PC-3 (cell line): ENCODE measurements at regions of chr13 and their contacts with region 1.

Region 1: DNA sequence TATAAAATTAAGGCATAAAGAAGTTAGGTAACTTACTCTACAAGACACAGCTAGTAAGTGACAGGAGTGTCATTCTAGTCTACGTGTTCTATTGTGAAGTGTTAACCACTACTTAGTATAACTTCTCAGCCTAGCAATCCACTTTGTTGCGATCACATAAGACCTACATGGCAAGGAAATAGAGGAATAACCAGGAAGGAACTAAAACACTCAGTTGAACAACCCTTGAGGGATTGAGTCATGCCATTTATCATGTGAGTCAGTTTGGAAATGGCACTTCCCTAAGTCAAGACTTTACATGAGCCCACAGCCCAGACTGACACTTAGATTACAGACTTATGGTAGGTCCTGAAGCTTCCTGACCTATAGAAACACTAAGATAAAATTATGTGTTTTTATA is 279.5 kb upstream of the PCDH20 start:
- DNase-seq: peak; percentile 46
- ATAC-seq: peak; percentile 91
- H3K4me3 ChIP-seq: no peak overlapping the region
- H3K27ac ChIP-seq: no peak overlapping the region
- H3K4me1 ChIP-seq: no peaks in the 10 kb centered on the region
- H3K27me3 ChIP-seq: no peaks in the 10 kb centered on the region
- CTCF ChIP-seq: no peak

Region 2: DNA sequence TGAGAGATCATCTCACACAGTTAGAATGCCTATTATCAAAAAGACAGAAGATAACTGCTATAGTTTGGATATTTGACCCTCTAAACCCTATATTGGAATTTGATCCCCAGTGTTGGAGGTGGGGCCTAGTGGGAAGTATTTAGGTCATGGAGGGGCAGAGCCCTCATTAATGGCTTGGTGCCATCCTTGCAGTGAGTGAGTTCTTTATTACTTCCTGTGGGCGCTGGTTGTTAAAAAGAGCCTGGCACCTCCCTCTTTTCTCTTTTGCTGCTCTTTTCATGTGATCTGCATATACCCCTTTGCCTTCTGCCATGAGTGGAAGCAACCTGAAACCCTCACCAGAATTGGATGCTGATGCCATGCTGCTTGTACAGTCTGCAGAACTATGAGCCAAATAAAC is 1231.4 kb before region 1 on chr13:
- CTCF ChIA-PET with region 1: no interaction called
- POLR2A ChIA-PET with region 1: no interaction called
- intact Hi-C with region 1: loop called (anchors 10 kb)
- DNase-seq: peak; percentile 7
- ATAC-seq: peak; percentile 15; the same call in 1 of the 2 replicates
- H3K4me3 ChIP-seq: no peak overlapping the region
- H3K27ac ChIP-seq: no peak overlapping the region
- H3K4me1 ChIP-seq: no peaks in the 10 kb centered on the region
- H3K27me3 ChIP-seq: no peaks in the 10 kb centered on the region
- CTCF ChIP-seq: no peak

Region 3: DNA sequence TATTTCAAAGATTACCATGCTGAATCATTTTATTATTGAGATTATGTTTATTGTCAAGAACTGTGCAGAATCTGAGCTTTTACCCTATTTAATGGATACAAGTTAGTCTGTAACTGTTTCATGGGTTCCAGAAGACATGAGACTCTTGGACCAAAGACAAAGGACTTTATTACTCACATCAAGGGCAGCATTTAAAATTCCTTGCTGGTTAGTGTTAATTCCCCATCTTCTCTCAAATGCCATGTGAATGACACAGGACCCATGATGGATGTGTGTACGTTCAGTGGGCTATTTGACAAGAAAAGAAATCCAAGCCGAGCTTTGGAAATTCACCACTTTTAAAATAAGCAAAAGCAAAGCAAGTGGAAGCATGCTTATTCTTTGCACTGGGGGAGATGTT is 419.4 kb before region 1 on chr13:
- CTCF ChIA-PET with region 1: no interaction called
- POLR2A ChIA-PET with region 1: no interaction called
- intact Hi-C with region 1: no loop called
- DNase-seq: no peak
- ATAC-seq: no peak
- H3K4me3 ChIP-seq: no peak overlapping the region
- H3K27ac ChIP-seq: no peak overlapping the region
- H3K4me1 ChIP-seq: no peaks in the 10 kb centered on the region
- H3K27me3 ChIP-seq: no peaks in the 10 kb centered on the region
- CTCF ChIP-seq: no peak

Region 4: GRCh38 chr13:61738236-61738750 is 43.1 kb after region 1 on chr13:
- CTCF ChIA-PET with region 1: no interaction called
- POLR2A ChIA-PET with region 1: no interaction called
- intact Hi-C with region 1: no loop called
- DNase-seq: no peak
- ATAC-seq: no peak
- H3K4me3 ChIP-seq: no peak overlapping the region
- H3K27ac ChIP-seq: no peak overlapping the region
- H3K4me1 ChIP-seq: no peaks in the 10 kb centered on the region
- H3K27me3 ChIP-seq: no peaks in the 10 kb centered on the region
- CTCF ChIP-seq: no peak